PC-3 (cell line): ENCODE measurements at regions of chr12 and their contacts with region 1.

Region 1: DNA sequence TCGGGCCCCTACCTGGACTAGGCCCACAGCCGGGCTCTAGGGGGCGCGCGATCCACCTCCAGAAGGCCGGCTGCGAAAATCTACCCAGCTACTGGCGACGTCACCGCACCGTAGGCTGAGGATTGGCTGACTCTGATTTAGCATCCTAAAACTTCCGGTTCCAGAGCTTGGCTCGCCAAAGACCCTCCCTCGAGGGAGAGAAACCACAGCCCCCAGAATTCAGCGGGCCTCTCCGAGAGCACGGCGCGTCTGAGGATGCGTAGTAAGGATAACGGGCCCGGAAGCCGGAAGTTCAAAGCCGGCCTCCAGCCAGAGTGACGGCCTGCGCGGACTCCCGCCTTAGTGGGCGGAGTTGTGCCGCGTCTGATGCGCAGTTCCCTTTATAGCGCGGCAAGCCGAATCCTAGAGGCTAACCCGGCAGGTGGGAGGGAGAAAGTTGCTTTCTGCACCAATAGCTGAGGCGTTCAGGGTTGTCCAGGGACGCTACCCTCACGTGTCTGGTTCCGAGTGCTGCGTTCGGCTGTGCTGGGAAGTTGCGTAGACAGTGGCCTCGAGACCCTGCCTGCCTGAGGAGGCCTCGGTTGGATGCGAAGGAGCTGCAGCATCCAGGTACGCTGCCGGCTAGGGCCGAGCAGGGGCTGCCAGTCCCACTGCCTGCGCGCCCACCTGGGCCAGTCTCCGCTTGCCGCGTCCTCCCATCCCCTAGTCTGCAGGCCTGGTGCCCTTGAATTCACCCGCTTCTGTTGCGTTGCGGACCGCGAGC is at the start of gene COX14:
- DNase-seq: peak; percentile 100
- ATAC-seq: peak; percentile 92
- H3K4me3 ChIP-seq: peak within 1 kb of the TSS; percentile 95
- H3K27ac ChIP-seq: peak within 1 kb of the TSS; percentile 70
- H3K4me1 ChIP-seq: peaks cover 14% of the 10 kb centered on the region; the same call in 1 of the 2 replicates
- H3K27me3 ChIP-seq: no peaks in the 10 kb centered on the region
- CTCF ChIP-seq: peak; percentile 92
- total RNA-seq, gene COX14: 75.7 and 84.7 TPM in 2 replicates

Region 2: DNA sequence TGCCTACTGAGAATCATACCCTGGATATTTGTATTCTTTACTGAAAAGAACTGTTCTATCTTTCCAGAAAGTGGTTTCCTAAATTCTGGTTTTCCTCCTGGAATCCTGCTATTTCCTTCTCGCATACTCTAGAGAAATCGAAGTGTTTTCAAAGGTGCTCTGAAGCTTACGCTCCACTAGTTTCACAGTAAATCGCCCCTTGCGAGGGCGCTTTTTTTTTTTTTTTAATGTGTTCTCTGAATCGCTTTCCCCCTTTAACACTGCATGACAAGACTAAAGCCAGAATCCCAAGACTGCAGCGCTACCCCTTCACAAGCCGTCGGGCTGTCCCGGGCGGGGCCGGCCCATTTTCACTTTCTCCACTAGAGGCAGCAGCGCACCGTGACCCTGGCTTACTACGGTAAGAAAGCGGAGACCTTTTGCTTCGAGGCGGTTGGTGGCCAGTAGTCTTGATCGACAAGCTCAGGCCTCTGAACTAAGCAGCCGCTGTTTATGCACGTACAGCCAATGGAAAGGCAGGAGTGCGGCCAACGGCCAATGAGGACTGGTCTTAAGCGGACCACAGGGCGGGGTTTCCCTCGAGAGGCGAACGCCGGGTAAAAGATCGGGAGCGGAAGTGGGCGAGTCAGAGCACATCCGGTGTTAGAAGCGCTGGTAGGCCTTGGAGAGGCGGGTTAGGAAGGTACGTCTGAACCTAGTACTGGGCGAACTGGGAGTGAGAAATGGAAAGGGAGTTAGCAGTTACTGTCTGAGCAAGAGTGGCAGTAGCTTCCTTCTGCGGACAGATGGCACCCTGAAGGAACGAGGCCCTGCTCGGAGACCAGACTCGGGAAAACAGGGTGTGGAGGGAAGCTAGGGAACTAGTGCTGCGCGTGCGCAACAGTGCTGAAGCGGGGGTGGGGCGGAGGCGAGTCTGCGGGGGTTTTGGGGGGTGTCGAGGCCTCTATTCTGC is 370.7 kb before region 1 on chr12 and contains the start of gene TMBIM6:
- CTCF ChIA-PET with region 1: no interaction called
- POLR2A ChIA-PET with region 1: interaction called, 16 read pairs
- intact Hi-C with region 1: no loop called
- DNase-seq: peak; percentile 100
- ATAC-seq: peak; percentile 97
- H3K4me3 ChIP-seq: peak within 1 kb of the TSS; percentile 91
- H3K27ac ChIP-seq: peak within 1 kb of the TSS; percentile 85
- H3K4me1 ChIP-seq: peaks cover 27% of the 10 kb centered on the region
- H3K27me3 ChIP-seq: no peaks in the 10 kb centered on the region
- CTCF ChIP-seq: peak; percentile 88
- total RNA-seq, gene TMBIM6: 396 and 402 TPM in 2 replicates

Region 3: GRCh38 chr12:50084775-50085614 is 26.9 kb before region 1 on chr12 and contains the start of gene SMARCD1:
- CTCF ChIA-PET with region 1: interaction called, 19 read pairs
- POLR2A ChIA-PET with region 1: interaction called, 29 read pairs
- intact Hi-C with region 1: loop called (anchors 1 kb)
- DNase-seq: peak; percentile 92
- ATAC-seq: peak; percentile 77
- H3K4me3 ChIP-seq: peak within 1 kb of the TSS; percentile 78
- H3K27ac ChIP-seq: peak within 1 kb of the TSS; percentile 71
- H3K4me1 ChIP-seq: peaks cover 40% of the 10 kb centered on the region
- H3K27me3 ChIP-seq: no peaks in the 10 kb centered on the region
- CTCF ChIP-seq: peak; percentile 86
- total RNA-seq, gene SMARCD1: 105 and 109 TPM in 2 replicates

Region 4: DNA sequence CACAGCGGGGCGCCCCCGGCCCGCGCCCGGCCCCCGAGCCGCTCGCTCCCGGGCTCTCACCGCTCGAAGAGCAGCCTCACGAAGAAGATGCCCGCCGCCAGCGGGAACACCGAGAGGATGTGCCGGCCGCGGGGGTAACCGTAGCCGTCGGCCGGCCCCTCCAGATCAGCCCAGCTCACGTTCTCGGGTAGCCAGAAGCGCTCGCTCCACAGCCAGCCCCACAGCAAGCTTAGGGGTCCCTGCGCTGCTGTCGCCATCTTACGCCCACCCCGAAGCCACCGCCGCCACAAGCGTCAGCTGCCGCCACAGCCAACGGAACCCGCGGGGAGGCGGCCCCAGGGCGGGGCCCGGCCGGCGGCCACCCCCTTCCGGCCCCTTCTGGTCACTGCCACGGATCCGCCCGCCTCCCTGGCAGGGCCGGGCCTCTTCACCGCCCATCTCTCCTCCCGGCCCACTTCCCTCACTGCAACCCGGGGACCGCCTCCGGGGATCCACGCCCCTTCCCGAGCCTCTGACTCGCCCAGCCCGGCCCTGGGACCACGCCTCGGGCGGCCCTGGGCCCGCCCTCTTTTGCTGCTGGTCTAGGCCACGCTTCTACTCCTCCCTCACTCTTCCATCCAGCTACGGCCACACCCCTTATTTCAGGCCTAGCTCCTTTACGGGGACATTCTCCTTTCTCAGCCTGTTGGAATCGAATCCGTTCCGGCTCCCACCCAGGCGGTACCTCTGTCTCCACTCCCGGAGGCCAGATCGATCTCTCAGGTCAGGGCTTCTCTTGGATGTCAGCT is 55.4 kb after region 1 on chr12 and contains the start of gene CERS5:
- CTCF ChIA-PET with region 1: interaction called, 11 read pairs
- POLR2A ChIA-PET with region 1: interaction called, 4 read pairs
- intact Hi-C with region 1: no loop called
- DNase-seq: peak; percentile 99
- ATAC-seq: peak; percentile 98
- H3K4me3 ChIP-seq: peak within 1 kb of the TSS; percentile 95
- H3K27ac ChIP-seq: peak within 1 kb of the TSS; percentile 20; the same call in 1 of the 2 replicates
- H3K4me1 ChIP-seq: peaks cover 8% of the 10 kb centered on the region
- H3K27me3 ChIP-seq: no peaks in the 10 kb centered on the region
- CTCF ChIP-seq: no peak
- total RNA-seq, gene CERS5: 24.9 and 29.7 TPM in 2 replicates

Region 5: DNA sequence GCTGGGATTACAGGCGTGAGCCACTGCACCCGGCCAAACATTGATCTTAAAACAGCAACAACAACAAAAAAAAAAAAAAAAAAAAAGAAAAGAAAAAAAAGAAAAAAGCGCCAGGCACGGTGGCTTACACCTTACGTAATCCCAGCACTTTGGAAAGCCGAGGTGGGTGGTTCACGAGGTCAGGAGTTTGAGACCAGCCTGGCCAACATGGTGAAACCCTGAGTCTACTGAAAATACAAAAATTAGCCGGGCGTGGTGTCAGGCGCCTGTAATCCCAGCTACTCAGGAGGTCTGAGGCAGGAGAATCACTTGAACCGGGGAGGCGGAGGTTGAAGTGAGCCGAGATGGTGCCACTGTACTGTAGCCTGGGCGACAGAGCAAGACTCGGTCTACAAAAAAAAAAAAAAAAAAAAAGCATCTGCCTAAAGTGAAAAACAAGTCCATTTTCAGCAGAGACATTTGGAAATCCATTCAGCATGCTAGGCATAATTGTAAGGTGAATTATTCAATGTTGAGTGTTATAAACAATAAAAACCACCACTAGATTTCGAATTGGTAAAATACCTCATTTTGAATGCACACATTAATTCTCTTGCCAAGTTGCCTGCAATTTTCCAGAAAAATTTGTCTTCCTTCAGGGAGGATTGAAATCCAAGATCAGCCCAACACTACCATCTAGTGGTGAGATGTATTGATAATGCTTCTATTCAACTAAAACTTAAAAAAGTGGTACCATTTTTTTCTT is 63.3 kb after region 1 on chr12:
- CTCF ChIA-PET with region 1: interaction called, 22 read pairs
- POLR2A ChIA-PET with region 1: no interaction called
- intact Hi-C with region 1: no loop called
- DNase-seq: peak; percentile 88
- ATAC-seq: peak; percentile 38
- H3K4me3 ChIP-seq: no peak overlapping the region
- H3K27ac ChIP-seq: no peak overlapping the region
- H3K4me1 ChIP-seq: no peaks in the 10 kb centered on the region
- H3K27me3 ChIP-seq: no peaks in the 10 kb centered on the region
- CTCF ChIP-seq: peak; percentile 83